ENCODE measurements at regions of chr9 and their contacts with region 1.

Region 1: DNA sequence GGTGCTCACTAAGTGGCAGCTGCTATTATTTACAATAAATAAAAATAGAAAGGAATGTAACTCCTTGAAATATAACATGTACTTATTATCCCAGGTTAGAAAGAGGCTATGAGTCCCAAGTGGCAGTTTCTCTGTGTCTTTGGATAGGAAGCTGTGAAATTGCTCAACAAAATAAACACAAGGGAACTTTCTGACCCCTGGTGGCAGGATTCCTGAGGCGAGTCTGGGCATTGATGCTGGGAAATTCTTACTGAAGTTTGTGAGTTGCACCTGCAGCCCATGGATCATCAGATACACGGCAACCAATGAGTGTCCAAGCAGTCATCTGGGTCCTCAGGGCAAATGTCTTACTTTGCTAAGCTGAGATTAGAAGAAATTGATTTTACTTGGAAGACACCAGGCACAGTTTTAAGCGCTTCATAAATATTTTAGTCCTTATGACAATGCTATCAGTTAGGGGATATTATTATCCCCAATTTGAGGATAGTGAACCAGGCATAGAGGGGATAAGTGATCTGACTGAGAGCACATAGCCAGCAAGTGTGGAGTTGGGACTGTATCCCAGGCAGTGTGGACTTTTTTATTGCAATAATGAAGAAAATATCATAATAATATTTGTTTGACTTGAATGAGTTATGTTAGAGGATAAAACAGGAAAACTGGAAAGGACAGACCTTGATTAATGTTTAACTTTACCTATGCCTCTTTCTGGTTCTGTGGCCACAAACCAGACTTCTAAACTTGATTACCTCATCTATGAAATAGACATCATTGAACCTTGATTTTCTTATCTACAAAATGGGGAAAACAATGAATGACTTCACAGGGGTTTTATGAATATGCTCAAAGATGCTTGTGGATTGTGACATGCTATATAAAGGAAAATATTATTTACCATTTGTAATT is 265.5 kb upstream of the ADAMTSL1 start:
- DNase-seq: no peak
- H3K4me3 Mint-ChIP-seq: no peak overlapping the region
- H3K27ac Mint-ChIP-seq: no peak overlapping the region
- H3K4me1 Mint-ChIP-seq: no peaks in the 10 kb centered on the region
- H3K27me3 Mint-ChIP-seq: no peaks in the 10 kb centered on the region

Region 2: GRCh38 chr9:17810728-17811571 is 397.5 kb before region 1 on chr9:
- intact Hi-C with region 1: loop called (anchors 1 kb)
- DNase-seq: peak; percentile 9
- H3K4me3 Mint-ChIP-seq: no peak overlapping the region
- H3K27ac Mint-ChIP-seq: no peak overlapping the region
- H3K4me1 Mint-ChIP-seq: no peaks in the 10 kb centered on the region
- H3K27me3 Mint-ChIP-seq: no peaks in the 10 kb centered on the region

Region 3: DNA sequence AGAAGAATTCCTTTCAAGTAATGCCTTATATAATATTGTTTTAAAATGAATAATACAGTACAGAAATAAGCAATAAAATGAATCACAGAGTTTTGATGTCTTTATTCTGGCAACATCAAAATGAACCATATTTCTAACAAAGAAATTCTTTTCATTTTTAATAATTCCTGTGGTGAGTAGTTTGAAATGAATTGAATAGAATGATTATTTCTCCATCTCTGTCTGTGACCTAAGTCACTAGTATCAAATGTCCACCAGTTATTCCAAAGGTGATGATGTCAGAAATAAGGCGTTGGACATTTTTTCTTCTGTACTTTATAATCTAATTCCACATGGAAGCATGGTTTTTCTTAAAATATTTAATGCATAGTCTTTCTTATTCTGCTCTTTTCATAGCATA is 371.7 kb after region 1 on chr9:
- intact Hi-C with region 1: no loop called
- DNase-seq: no peak
- H3K4me3 Mint-ChIP-seq: no peak overlapping the region
- H3K27ac Mint-ChIP-seq: no peak overlapping the region
- H3K4me1 Mint-ChIP-seq: no peaks in the 10 kb centered on the region
- H3K27me3 Mint-ChIP-seq: no peaks in the 10 kb centered on the region

Measured in activated T-helper 2 cell treated with anti-CD3 and anti-CD28 coated beads, Interferon-gamma antibody, Interleukin-2, Interleukin-4, amounts not matched to agents 10 μg/mL and 5 μg/mL and 100 μg/mL, durations not matched to agents 14 hours and 24 hours and 36 hours (primary cell).